Activated CD8-positive, alpha-beta memory T cell treated with anti-CD3 and anti-CD28 coated beads, Interleukin-2, amount 10 ng/mL, durations not matched to agents 7 days and 5 days (primary cell): ENCODE measurements at regions of chr13 and their contacts with region 1.

Region 1: GRCh38 chr13:24693862-24694471 is 13.8 kb downstream of the ATP12A start:
- DNase-seq: peak; percentile 67
- ATAC-seq: peak; percentile 74
- H3K4me3 Mint-ChIP-seq: peak overlapping the region; percentile 34
- H3K27ac Mint-ChIP-seq: no peak overlapping the region
- H3K4me1 Mint-ChIP-seq: peaks cover 21% of the 10 kb centered on the region
- H3K27me3 Mint-ChIP-seq: peaks cover 50% of the 10 kb centered on the region

Region 2: DNA sequence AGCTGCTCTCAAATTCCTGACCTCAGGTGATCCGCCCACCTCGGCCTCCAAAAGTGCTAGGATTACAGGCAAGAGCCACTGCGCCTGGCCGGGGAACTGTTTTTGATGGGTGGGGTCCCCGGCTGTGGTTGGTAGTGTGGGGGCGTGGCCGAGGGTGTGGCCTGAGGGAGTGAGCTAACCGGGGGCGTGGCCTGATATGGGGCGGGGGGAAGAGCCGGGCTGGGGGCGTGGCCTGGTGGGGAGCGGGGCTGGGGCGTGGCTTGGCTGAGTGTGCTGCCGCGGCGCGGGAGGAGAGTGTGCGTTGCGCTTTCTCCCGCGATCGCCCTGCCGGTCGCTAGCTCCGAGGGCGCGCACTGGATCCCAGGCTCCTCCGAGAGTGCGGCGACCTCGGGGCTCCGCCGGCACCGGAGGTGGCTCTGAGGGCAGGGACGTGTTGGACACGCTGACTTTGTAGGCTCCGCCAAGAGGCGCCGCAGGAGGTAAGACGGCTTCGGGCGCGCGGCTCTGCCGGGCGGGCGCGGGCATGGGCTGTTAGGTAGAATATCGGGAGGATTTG is 533.4 kb before region 1 on chr13 and contains the start of gene SPATA13:
- CTCF ChIA-PET with region 1: no interaction called
- DNase-seq: peak; percentile 94
- ATAC-seq: peak; percentile 93
- H3K4me3 Mint-ChIP-seq: peak within 1 kb of the TSS; percentile 83
- H3K27ac Mint-ChIP-seq: peak within 1 kb of the TSS; percentile 48
- H3K4me1 Mint-ChIP-seq: peaks cover 33% of the 10 kb centered on the region
- H3K27me3 Mint-ChIP-seq: peaks cover 13% of the 10 kb centered on the region
- total RNA-seq, gene SPATA13: 51.0 to 57.8 TPM

Region 3: GRCh38 chr13:24632382-24633121 is 61.4 kb before region 1 on chr13:
- CTCF ChIA-PET with region 1: no interaction called
- DNase-seq: no peak
- ATAC-seq: no peak
- H3K4me3 Mint-ChIP-seq: no peak overlapping the region
- H3K27ac Mint-ChIP-seq: no peak overlapping the region
- H3K4me1 Mint-ChIP-seq: peaks cover 31% of the 10 kb centered on the region
- H3K27me3 Mint-ChIP-seq: no peaks in the 10 kb centered on the region

Region 4: DNA sequence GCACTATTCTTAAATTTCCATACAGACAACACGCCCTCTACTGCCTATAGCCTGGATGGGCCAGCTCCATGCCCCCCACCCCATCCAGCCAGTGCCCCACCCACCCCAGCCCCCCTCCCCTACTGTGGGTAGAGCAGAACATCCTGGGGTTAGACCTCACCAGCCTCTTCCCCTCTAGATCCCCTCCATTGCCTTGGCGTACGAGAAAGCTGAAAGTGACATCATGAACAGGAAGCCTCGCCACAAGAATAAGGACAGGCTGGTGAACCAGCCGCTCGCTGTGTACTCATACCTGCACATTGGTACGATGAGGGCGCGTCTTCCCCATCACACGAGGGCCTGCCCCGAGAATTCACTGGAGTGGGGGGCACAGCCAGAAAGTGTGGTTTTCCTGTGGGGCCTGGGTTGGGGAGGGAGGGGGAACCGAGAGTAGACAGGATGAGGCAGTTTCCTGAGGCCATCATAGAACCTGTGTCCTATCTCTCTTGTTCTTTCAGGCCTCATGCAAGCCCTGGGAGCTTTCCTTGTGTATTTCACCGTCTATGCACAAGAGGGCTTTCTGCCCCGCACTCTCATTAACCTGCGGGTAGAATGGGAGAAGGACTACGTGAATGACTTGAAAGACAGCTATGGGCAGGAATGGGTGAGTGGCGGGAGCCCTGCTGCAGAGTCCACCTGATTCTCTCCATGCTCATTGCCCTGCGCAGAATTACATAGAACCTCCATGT is 15.4 kb after region 1 on chr13:
- CTCF ChIA-PET with region 1: interaction called, 59 read pairs
- DNase-seq: peak; percentile 92
- ATAC-seq: peak; percentile 97
- H3K4me3 Mint-ChIP-seq: peak overlapping the region; percentile 49
- H3K27ac Mint-ChIP-seq: peak overlapping the region; percentile 82
- H3K4me1 Mint-ChIP-seq: peaks cover 32% of the 10 kb centered on the region
- H3K27me3 Mint-ChIP-seq: peaks cover 4% of the 10 kb centered on the region

Region 5: GRCh38 chr13:24718192-24718965 is 24.4 kb after region 1 on chr13:
- CTCF ChIA-PET with region 1: interaction called, 103 read pairs
- DNase-seq: no peak
- ATAC-seq: no peak
- H3K4me3 Mint-ChIP-seq: no peak overlapping the region
- H3K27ac Mint-ChIP-seq: no peak overlapping the region
- H3K4me1 Mint-ChIP-seq: peaks cover 8% of the 10 kb centered on the region
- H3K27me3 Mint-ChIP-seq: peaks cover 14% of the 10 kb centered on the region